Activated T-helper 1 cell treated with anti-CD3 and anti-CD28 coated beads, Interleukin-12 subunit alpha, Interleukin-12 subunit beta, Interleukin-2, Interleukin-4 antibody, amounts not matched to agents 30 ng/mL and 10 ng/mL and 1 ng/mL, durations not matched to agents 14 hours and 24 hours and 36 hours (primary cell): ENCODE measurements at regions of chr1 and their contacts with region 1.

Region 1: DNA sequence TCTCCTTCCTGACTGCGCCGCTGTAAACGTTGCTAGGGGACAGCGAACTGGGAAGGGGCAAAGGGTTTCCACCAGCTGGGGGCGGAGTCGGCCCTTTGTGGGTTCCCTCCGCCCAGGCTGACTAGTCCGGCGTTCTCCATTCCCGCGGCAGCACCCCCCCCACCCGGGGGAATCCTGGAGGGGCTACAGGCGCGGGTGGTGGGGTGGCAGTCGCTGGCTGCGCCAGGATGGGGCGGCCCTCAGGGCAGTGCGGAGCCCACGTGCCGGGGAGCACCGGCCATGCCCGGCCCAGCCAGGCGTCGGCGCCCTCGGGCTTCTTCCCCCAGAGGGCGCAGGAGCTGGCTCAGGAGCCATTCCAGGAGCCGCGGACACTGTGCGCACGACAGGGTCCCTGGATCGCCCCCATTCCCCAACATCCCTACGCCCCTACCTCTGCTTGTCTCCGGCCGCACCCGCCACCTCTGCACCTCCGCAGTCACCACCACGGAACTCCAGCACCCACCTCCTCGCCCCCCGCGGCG is 476 bp downstream of the BATF3 start:
- DNase-seq: peak; percentile 43
- H3K4me3 Mint-ChIP-seq: peak overlapping the region; percentile 92
- H3K27ac Mint-ChIP-seq: peak overlapping the region; percentile 66
- H3K4me1 Mint-ChIP-seq: peaks cover 57% of the 10 kb centered on the region
- H3K27me3 Mint-ChIP-seq: peaks cover 12% of the 10 kb centered on the region

Region 2: DNA sequence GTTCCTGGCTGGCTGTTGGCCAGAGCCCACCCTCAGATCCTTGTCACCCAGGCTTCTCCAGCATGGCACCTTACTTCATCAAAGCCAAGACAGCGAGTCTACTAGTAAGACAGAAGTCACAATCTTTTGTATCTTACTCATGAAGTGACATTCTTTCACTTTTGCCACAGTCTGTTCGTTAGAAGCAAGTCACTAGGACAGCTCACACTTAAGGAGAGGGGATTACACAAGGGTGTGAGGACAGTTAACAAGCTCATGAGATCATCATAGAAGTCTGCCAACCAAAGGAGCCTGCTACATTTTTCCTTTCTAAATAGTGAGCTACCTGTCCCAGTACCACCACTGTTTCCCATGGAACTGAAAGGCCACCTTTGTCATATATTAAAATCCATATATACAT is 346.0 kb before region 1 on chr1:
- intact Hi-C with region 1: no loop called
- DNase-seq: no peak
- H3K4me3 Mint-ChIP-seq: no peak overlapping the region
- H3K27ac Mint-ChIP-seq: no peak overlapping the region
- H3K4me1 Mint-ChIP-seq: peaks cover 2% of the 10 kb centered on the region
- H3K27me3 Mint-ChIP-seq: no peaks in the 10 kb centered on the region

Region 3: DNA sequence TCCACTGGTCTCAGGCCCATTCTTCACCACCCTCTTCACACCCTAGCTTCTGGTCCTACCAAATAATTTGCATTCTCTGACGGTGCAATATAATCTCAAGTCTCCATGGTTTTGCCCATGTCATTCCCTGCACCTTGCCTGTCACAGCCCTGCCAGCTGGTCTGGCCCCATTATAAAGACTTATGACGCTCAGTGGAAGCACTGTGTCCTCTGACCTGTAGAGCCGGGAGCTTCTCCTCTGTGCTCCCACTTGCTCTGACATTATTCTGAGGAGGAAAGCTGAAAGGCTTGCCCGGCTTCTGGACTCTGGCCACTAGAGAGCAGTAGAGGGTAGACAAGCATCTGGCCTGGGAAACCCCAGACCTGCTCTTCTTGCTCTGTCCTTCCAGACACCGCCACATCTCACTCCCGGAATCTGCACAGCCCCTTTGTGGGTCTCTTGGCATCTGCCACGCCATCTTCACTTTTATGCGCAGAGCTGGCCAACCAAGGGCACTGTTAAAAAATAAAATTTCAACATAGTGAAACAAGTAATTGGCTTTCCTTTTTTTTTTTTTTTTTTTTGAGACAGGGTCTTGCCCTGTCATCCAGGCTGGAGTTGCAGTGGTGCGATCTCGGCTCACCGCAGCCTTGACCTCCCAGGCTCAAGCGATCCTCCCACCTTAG is 222.0 kb before region 1 on chr1:
- intact Hi-C with region 1: loop called (anchors 1 kb)
- DNase-seq: peak; percentile 71
- H3K4me3 Mint-ChIP-seq: no peak overlapping the region
- H3K27ac Mint-ChIP-seq: no peak overlapping the region
- H3K4me1 Mint-ChIP-seq: peaks cover 15% of the 10 kb centered on the region
- H3K27me3 Mint-ChIP-seq: peaks cover 9% of the 10 kb centered on the region

Region 4: DNA sequence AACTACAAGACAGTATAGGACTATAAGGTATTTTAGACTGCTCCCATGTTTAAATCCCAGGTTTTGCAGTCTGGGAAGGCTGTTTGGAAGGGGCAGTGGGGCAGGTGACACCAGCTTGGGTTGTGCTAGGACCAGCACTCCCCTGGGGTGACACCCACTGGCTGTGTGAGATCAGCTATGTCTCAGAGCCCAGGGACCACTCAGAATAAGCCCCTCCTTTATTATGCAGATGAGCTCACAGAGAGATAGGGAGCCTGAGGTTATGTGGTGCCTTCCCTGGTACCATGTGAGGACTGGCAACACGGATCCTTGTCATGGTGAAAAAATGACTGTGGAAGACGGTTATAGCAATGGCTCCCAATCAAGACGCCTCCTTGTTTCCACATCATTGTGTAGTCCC is 195.4 kb before region 1 on chr1:
- intact Hi-C with region 1: no loop called
- DNase-seq: no peak
- H3K4me3 Mint-ChIP-seq: no peak overlapping the region
- H3K27ac Mint-ChIP-seq: no peak overlapping the region
- H3K4me1 Mint-ChIP-seq: no peaks in the 10 kb centered on the region
- H3K27me3 Mint-ChIP-seq: peaks cover 3% of the 10 kb centered on the region

Region 5: DNA sequence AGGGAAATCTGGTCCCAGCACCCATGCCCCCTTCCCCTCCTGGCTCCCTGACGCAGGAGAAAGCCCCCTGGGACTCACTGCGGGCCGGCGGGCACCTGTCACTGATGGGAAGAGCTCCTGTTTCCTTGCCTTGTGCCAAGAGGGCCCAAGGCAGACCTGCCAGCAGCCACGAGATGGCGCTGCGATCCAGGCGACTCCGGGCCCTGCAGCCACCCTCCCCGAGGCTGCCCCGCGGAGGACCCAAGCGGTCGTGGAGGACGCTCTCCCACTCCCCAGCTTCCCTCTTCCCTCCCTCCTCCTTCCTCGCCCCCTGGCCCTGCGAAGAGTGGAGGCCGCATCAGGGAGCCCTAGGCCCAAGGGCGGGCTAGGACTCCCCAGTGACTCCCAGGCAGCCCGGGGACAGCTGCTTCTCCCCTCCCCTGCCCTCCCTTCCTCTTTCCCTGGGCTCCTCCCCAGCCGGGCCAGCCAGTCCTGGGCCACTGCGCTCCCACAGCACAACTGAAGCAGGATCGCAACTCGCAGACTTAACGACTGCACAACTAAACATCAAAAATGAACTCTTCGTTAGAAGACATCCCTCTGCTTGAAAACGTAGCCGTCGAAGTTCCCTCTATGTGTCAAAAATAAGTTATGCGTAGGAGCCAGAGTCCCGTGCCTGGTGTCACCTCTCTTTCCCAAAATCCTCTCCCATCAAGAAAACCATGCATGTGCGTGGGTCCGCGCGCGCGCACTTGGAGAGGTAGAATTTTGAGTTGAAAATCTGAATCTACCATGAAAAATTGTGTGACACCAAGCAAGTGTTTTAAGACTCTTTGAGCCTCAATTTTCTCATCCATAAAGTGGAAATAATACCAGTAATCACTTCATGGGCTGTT is 33.7 kb before region 1 on chr1:
- intact Hi-C with region 1: loop called (anchors 5 kb)
- DNase-seq: peak; percentile 74
- H3K4me3 Mint-ChIP-seq: peak overlapping the region; percentile 82
- H3K27ac Mint-ChIP-seq: peak overlapping the region; percentile 70
- H3K4me1 Mint-ChIP-seq: peaks cover 24% of the 10 kb centered on the region
- H3K27me3 Mint-ChIP-seq: peaks cover 13% of the 10 kb centered on the region

Region 6: GRCh38 chr1:212688341-212689047 is 10.7 kb before region 1 on chr1:
- intact Hi-C with region 1: no loop called
- DNase-seq: no peak
- H3K4me3 Mint-ChIP-seq: no peak overlapping the region
- H3K27ac Mint-ChIP-seq: no peak overlapping the region
- H3K4me1 Mint-ChIP-seq: peaks cover 21% of the 10 kb centered on the region
- H3K27me3 Mint-ChIP-seq: no peaks in the 10 kb centered on the region

Region 7: GRCh38 chr1:212721388-212722247 is 22.5 kb after region 1 on chr1:
- intact Hi-C with region 1: loop called (anchors 1 kb)
- DNase-seq: peak; percentile 39
- H3K4me3 Mint-ChIP-seq: peak overlapping the region; percentile 34
- H3K27ac Mint-ChIP-seq: peak overlapping the region; percentile 82
- H3K4me1 Mint-ChIP-seq: peaks cover 44% of the 10 kb centered on the region
- H3K27me3 Mint-ChIP-seq: peaks cover 6% of the 10 kb centered on the region

Region 8: GRCh38 chr1:212782422-212783154 is 83.4 kb after region 1 on chr1:
- intact Hi-C with region 1: loop called (anchors 1 kb)
- DNase-seq: no peak
- H3K4me3 Mint-ChIP-seq: no peak overlapping the region
- H3K27ac Mint-ChIP-seq: no peak overlapping the region
- H3K4me1 Mint-ChIP-seq: peaks cover 4% of the 10 kb centered on the region
- H3K27me3 Mint-ChIP-seq: no peaks in the 10 kb centered on the region

Region 9: DNA sequence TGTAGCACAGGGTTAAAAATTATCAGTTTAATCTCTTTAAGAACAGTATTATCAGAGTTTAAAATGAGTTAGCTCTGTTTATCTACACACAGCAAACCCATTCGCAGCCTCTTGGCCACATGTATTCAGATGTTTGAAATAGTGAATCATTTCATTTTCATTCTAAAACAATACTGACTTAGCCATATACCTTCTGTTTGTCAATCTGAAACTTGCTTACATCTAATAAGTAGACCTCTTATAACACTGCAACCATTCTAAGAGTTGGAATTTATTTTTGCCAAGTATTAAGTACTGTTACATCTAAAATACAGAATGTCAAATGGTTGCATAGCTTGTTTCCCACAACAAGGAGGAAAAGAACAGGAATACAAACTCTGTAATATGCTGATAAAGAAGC is 291.1 kb after region 1 on chr1:
- intact Hi-C with region 1: loop called (anchors 1 kb)
- DNase-seq: no peak
- H3K4me3 Mint-ChIP-seq: no peak overlapping the region
- H3K27ac Mint-ChIP-seq: no peak overlapping the region
- H3K4me1 Mint-ChIP-seq: peaks cover under 1% of the 10 kb centered on the region
- H3K27me3 Mint-ChIP-seq: no peaks in the 10 kb centered on the region